Aorta (tissue), 5 donors: ENCODE measurements at regions of chr17 and their contacts with region 1.

Region 1: DNA sequence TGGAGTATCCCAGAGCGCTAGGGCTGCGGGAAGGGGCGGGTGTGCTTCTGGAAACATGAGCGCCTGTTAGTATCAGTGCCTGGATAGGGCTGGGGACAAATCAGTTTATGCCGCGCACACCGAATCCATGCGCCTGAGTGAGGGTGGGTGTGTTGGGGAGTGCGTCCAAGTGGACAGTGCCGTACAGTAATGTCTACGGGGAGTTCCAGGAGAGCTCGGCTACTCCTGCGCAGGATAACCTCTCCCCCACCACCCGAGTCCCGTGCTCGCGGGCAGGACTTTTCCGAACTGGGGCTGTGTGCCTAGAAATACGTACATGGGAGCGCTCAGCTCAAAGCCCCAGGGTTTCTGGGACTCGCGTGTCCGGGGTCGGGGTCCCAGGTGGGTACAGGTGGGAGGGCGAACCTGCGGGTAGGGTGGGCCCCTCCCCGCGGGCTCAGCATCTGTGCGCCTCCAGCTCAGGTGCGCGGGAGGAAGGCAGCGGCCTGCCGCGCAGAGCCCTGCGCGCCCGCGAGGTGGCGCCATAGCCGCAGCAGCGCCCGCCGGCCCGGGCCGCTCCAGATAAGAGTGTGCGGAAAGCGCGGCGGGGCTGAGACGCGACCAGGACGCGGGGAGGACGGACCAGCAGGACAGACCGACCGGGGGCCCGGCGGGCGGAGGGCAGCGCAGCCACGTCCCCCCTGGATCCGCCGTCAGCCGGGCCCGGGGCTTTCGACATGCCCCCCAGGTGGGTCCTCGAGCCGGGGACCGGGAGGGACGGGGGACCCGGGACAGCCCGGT is at the start of gene HIC1:
- DNase-seq: peak; percentile 86 to 94
- ATAC-seq: peak; percentile 76
- H3K4me3 ChIP-seq: peak within 1 kb of the TSS; percentile 9 to 10
- H3K27ac ChIP-seq: no peak within 1 kb of the TSS
- H3K4me1 ChIP-seq: no peaks in the 10 kb centered on the region
- H3K27me3 ChIP-seq: no peaks in the 10 kb centered on the region
- total RNA-seq, gene HIC1: 27.2 to 69.2 TPM

Region 2: GRCh38 chr17:1947229-1947742 is 107.4 kb before region 1 on chr17:
- intact Hi-C with region 1: no loop called
- DNase-seq: no peak
- ATAC-seq: no peak
- H3K4me3 ChIP-seq: no peak overlapping the region
- H3K27ac ChIP-seq: no peak overlapping the region
- H3K4me1 ChIP-seq: no peaks in the 10 kb centered on the region
- H3K27me3 ChIP-seq: no peaks in the 10 kb centered on the region

Region 3: GRCh38 chr17:2282297-2282873 is 227.7 kb after region 1 on chr17:
- intact Hi-C with region 1: loop called in 1 of 2 experiments (anchors 2 kb)
- DNase-seq: no peak
- ATAC-seq: peak; percentile 68
- H3K4me3 ChIP-seq: no peak overlapping the region
- H3K27ac ChIP-seq: peak overlapping the region in 1 of 2 donors; percentile 33
- H3K4me1 ChIP-seq: no peaks in the 10 kb centered on the region
- H3K27me3 ChIP-seq: no peaks in the 10 kb centered on the region

Region 4: DNA sequence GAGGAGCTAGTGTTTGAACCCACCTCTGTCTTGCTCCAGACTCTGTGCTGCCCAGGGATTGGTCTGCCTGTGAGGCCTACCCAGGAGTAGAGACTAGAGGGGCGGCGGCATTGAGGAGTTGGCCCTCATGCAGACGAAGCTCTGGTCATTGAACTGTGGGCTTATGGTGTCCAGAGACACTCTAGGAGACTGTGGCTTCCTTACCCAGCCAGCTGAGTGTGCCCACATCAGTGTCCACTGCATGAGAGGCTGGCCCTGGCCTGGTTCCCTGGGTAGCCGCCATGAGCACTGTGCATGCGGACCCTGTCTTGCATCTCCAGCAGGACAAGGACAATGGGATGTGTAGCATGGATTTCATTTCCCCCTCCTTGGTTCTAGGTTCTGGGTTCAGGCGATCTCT is 296.6 kb after region 1 on chr17:
- intact Hi-C with region 1: loop called in 1 of 2 experiments (anchors 5 kb)
- DNase-seq: peak in 1 of 2 donors; percentile 32
- ATAC-seq: no peak
- H3K4me3 ChIP-seq: no peak overlapping the region
- H3K27ac ChIP-seq: no peak overlapping the region
- H3K4me1 ChIP-seq: no peaks in the 10 kb centered on the region
- H3K27me3 ChIP-seq: no peaks in the 10 kb centered on the region